ENCODE measurements at regions of chr6 and their contacts with region 1.

Region 1: DNA sequence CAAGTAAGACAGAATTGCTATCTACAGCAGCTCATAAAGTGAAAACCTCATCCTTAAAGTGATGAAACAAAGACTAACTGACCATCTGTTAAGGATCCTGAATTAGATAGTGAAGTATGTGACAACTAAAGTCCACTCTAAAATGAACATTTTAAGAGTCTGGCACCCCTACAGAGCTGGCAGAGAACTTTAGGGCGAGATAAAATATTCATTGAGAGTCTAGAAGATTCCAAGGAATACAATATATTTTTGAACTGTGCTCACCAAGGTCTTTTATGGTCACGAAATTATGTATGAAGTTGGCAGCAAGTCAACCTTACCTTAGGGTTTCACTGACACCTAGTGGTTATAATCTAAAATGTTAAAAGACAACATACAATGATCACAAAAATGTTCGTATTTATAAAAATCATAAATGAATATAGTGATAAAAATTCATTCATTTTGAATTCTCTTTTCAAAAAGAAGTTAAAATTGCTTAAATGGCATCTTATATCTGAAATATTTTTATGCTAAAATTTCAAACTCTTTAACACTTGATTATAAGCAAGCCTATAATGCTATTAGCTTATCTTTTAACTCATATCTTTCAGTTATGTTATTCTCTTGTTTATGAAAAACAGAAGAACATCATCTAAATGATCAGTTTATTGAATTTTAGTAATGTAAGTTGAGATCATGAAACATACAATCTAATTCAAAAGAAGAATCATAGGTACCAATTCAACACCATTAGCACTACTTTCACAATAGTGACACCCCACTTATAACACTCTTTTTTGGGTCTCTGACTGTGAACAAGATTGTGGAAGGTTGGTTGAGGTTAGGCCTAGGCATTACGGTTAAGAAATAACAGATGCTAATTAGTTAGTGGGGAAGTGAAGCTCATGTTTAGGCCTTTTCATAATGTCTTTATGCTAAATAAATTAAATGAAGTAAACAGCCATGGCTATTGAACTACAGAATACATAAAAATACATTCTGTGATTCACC is 27.5 kb downstream of the RSPH3 start:
- DNase-seq: no peak
- H3K4me3 Mint-ChIP-seq: no peak overlapping the region
- H3K27ac Mint-ChIP-seq: no peak overlapping the region
- H3K4me1 Mint-ChIP-seq: no peaks in the 10 kb centered on the region
- H3K27me3 Mint-ChIP-seq: no peaks in the 10 kb centered on the region

Region 2: DNA sequence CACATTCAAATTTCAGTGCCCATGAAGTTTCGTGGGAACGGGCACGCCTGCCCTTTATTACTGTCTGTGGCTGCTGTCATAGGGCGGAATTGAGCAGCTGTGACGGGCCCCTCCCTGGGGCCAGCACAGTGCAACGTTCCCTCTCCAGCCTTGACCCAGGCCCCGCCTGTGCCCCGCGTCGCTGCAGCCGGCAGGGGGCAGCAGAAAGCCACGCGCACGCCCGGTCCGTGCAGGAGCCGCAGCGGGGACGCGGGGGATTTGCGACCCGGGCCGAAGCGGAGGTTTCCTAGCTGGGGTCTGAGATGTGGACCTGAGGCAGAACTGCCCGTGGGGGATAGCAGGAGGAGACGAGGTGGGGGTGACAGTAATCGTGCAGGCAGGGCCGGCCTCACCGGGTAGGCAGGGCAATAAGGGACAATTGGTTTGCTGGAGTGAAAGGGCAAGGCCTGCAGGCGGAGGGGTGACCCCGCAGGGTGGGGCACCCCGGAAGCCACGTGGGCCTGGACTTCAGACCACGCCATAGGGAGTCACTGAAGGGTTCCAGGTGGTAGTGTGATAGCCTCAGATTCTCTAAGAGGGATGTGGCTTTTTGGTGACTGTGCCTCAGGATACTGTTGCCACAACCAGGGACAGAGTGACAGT is 268.2 kb before region 1 on chr6:
- CTCF ChIA-PET with region 1: interaction called, 49 read pairs
- DNase-seq: peak; percentile 81
- H3K4me3 Mint-ChIP-seq: peak overlapping the region; percentile 68
- H3K27ac Mint-ChIP-seq: peak overlapping the region; percentile 60
- H3K4me1 Mint-ChIP-seq: peaks cover 20% of the 10 kb centered on the region
- H3K27me3 Mint-ChIP-seq: no peaks in the 10 kb centered on the region

Region 3: GRCh38 chr6:158793432-158793831 is 179.1 kb before region 1 on chr6:
- CTCF ChIA-PET with region 1: interaction called, 13 read pairs
- DNase-seq: no peak
- H3K4me3 Mint-ChIP-seq: no peak overlapping the region
- H3K27ac Mint-ChIP-seq: no peak overlapping the region
- H3K4me1 Mint-ChIP-seq: peaks cover 81% of the 10 kb centered on the region
- H3K27me3 Mint-ChIP-seq: no peaks in the 10 kb centered on the region

Region 4: GRCh38 chr6:158962371-158962770 is 10.2 kb before region 1 on chr6:
- CTCF ChIA-PET with region 1: interaction called, 21 read pairs
- DNase-seq: no peak
- H3K4me3 Mint-ChIP-seq: no peak overlapping the region
- H3K27ac Mint-ChIP-seq: no peak overlapping the region
- H3K4me1 Mint-ChIP-seq: no peaks in the 10 kb centered on the region
- H3K27me3 Mint-ChIP-seq: peaks cover 18% of the 10 kb centered on the region

Measured in activated naive CD4-positive, alpha-beta T cell treated with anti-CD3 and anti-CD28 coated beads, Interleukin-2, amount 10 ng/mL, durations not matched to agents 7 days and 5 days (primary cell).